Activated CD4-positive, alpha-beta memory T cell treated with anti-CD3 and anti-CD28 coated beads, Interleukin-2, amount 10 ng/mL, durations not matched to agents 7 days and 5 days (primary cell): ENCODE measurements at regions of chr6 and their contacts with region 1.

Region 1: DNA sequence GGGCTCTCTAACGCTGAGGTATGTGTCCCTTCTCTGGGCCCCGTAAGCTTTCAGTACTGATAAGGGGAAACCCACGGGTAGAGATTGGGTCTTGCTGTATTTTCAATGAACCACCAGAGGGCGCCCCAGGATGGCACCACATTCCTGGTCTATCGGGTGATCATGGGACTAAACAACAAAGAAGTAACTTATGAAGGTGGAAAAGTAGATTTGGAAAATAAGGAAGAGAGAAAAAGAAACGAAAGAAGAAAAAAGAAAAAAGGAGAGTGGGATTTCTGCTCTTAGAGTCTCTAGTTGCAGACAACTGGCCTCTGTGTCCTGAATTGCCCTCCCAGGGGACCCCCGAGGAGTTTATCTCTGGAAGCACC is 93.8 kb downstream of the GMPR start:
- DNase-seq: peak; percentile 83
- H3K4me3 Mint-ChIP-seq: no peak overlapping the region
- H3K27ac Mint-ChIP-seq: no peak overlapping the region
- H3K4me1 Mint-ChIP-seq: peaks cover 3% of the 10 kb centered on the region
- H3K27me3 Mint-ChIP-seq: no peaks in the 10 kb centered on the region

Region 2: DNA sequence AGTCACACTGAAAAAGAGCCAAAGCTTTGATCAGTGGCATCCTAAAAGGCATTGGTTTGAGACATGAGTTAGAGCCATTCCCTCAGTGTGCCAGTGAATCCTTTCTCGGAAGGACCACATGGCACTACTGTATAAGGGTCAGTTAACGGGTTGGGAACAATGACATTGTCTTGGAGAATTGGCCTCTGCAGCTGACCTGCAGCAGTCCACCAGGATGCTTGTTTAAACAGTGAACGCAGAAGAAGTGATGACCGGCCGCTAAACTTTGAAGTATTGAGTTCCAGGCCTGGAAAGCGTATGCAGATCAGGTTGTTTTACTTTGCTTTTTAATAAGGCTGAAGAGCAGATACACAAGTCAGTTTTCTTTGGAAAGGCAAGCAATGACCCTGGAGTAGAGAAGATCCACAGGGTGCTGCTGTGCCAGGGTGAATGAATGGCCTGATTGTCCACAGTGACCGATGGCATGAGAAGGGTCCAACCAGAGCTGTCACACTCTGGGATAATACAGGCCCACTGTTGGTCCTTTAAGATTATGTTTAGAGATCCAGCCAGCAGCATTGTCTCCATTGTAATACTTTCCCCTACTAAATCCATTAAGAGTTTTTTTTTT is 36.0 kb before region 1 on chr6:
- CTCF ChIA-PET with region 1: no interaction called
- POLR2A ChIA-PET with region 1: no interaction called
- DNase-seq: no peak
- H3K4me3 Mint-ChIP-seq: no peak overlapping the region
- H3K27ac Mint-ChIP-seq: no peak overlapping the region
- H3K4me1 Mint-ChIP-seq: no peaks in the 10 kb centered on the region
- H3K27me3 Mint-ChIP-seq: no peaks in the 10 kb centered on the region

Region 3: GRCh38 chr6:16319813-16320532 is 12.2 kb before region 1 on chr6:
- CTCF ChIA-PET with region 1: interaction called, 63 read pairs
- POLR2A ChIA-PET with region 1: interaction called, 3 read pairs
- DNase-seq: peak; percentile 74
- H3K4me3 Mint-ChIP-seq: peak overlapping the region; percentile 71
- H3K27ac Mint-ChIP-seq: peak overlapping the region; percentile 98
- H3K4me1 Mint-ChIP-seq: peaks cover 79% of the 10 kb centered on the region
- H3K27me3 Mint-ChIP-seq: no peaks in the 10 kb centered on the region

Region 4: GRCh38 chr6:16409531-16410441 is 77.6 kb after region 1 on chr6:
- CTCF ChIA-PET with region 1: interaction called, 24 read pairs
- POLR2A ChIA-PET with region 1: no interaction called
- DNase-seq: peak; percentile 73
- H3K4me3 Mint-ChIP-seq: peak overlapping the region; percentile 63
- H3K27ac Mint-ChIP-seq: peak overlapping the region; percentile 73
- H3K4me1 Mint-ChIP-seq: peaks cover 65% of the 10 kb centered on the region
- H3K27me3 Mint-ChIP-seq: no peaks in the 10 kb centered on the region

Region 5: GRCh38 chr6:16770701-16771569 is 438.8 kb after region 1 on chr6:
- CTCF ChIA-PET with region 1: interaction called, 10 read pairs
- POLR2A ChIA-PET with region 1: no interaction called
- DNase-seq: peak; percentile 79
- H3K4me3 Mint-ChIP-seq: no peak overlapping the region
- H3K27ac Mint-ChIP-seq: no peak overlapping the region
- H3K4me1 Mint-ChIP-seq: peaks cover 57% of the 10 kb centered on the region
- H3K27me3 Mint-ChIP-seq: no peaks in the 10 kb centered on the region